A549 (cell line): ENCODE measurements at regions of chr16 and their contacts with region 1.

Region 1: DNA sequence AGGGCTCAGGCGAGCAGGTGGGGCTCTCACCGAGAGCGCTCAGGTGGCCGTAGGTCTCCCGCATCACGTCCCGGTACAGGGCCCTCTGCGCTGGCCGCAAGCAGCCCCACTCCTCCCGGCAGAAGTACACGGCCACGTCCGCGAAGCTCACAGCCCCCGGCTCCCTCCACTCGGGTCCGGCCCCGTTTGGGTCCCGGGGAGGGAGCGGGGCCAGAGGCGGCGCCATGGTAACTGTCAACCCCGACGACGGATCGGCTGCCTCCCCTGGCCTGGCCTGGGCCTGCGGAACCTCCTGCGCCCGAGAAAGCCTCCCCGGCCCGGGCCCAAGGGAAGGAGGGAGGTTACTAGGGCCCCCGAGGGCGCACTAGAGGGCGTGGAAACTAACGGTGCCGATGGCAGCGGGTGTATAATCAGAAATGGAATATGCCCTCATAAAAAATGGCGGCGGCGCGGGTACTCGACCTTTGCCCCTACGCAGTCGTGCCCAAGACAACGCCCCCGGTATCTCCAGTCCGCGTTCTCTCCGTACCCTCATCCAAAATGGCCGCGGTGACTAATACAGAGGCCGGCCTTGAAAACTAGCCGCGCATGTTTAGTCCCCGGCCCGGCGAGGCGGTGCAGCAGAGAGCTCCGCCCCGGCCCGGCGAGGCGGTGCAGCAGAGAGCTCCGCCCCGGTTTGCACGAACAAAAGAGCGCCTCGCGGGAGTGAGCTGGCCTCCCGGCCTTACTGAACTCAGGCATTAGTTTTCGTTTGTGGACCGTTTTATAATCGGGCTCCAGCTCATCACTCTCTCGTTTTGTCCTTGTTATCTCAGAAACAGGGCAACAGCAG is at the start of gene ZNF764:
- DNase-seq: peak; percentile 96 to 99
- ATAC-seq: peak; percentile 96 to 97
- H3K4me3 ChIP-seq: peak within 1 kb of the TSS; percentile 82
- H3K27ac ChIP-seq: peak within 1 kb of the TSS; percentile 93 to 98
- H3K4me1 ChIP-seq: peaks cover 4% of the 10 kb centered on the region; the same call in 1 of the 3 replicates
- CTCF ChIP-seq: no peak
- EP300 ChIP-seq: no peak
- POLR2A ChIP-seq: peak; percentile 55
- RAD21 ChIP-seq: peak in 1 of 2 experiments; percentile 19; a peak in 1 of 5 replicates
- polyA plus RNA-seq, gene ZNF764: 2.9 and 3.0 TPM in 2 replicates

Region 2: DNA sequence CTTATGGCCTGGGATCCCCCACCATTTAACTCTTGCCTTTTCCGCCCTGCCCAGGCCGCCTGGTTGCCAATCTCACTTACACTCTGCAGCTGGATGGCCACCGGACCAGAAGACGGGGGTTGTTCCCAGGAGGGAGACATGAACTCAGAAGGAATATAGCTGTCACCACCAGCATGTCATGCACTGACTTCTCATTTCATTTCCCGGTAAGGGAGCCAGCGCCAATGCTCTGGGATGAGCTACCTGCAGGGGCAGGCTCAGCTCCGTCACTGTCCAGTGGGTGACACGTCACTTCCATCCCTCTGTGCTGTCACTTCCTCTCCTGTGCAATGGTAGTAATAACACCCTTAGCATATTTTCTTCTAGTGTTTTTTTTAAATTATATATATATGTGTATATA is 58.9 kb before region 1 on chr16:
- CTCF ChIA-PET with region 1: no interaction called
- POLR2A ChIA-PET with region 1: no interaction called
- DNase-seq: no peak
- ATAC-seq: no peak; a peak in 1 of 6 replicates
- H3K4me3 ChIP-seq: no peak overlapping the region
- H3K27ac ChIP-seq: no peak overlapping the region
- H3K4me1 ChIP-seq: no peaks in the 10 kb centered on the region
- CTCF ChIP-seq: no peak
- EP300 ChIP-seq: no peak
- POLR2A ChIP-seq: no peak
- RAD21 ChIP-seq: no peak

Region 3: GRCh38 chr16:30534368-30535105 is 23.6 kb before region 1 on chr16 and contains the start of gene ZNF747:
- CTCF ChIA-PET with region 1: interaction called, 9 read pairs
- POLR2A ChIA-PET with region 1: interaction called, 36 read pairs
- DNase-seq: peak; percentile 77 to 90
- ATAC-seq: peak; percentile 91 to 93
- H3K4me3 ChIP-seq: peak within 1 kb of the TSS; percentile 52
- H3K27ac ChIP-seq: peak within 1 kb of the TSS; percentile 89 to 93
- H3K4me1 ChIP-seq: peaks cover 13% of the 10 kb centered on the region; the same call in 2 of the 3 replicates
- CTCF ChIP-seq: no peak
- EP300 ChIP-seq: no peak
- POLR2A ChIP-seq: peak; percentile 72
- RAD21 ChIP-seq: no peak; a peak in 1 of 5 replicates
- polyA plus RNA-seq, gene ZNF747: 4.8 and 5.2 TPM in 2 replicates

Region 4: DNA sequence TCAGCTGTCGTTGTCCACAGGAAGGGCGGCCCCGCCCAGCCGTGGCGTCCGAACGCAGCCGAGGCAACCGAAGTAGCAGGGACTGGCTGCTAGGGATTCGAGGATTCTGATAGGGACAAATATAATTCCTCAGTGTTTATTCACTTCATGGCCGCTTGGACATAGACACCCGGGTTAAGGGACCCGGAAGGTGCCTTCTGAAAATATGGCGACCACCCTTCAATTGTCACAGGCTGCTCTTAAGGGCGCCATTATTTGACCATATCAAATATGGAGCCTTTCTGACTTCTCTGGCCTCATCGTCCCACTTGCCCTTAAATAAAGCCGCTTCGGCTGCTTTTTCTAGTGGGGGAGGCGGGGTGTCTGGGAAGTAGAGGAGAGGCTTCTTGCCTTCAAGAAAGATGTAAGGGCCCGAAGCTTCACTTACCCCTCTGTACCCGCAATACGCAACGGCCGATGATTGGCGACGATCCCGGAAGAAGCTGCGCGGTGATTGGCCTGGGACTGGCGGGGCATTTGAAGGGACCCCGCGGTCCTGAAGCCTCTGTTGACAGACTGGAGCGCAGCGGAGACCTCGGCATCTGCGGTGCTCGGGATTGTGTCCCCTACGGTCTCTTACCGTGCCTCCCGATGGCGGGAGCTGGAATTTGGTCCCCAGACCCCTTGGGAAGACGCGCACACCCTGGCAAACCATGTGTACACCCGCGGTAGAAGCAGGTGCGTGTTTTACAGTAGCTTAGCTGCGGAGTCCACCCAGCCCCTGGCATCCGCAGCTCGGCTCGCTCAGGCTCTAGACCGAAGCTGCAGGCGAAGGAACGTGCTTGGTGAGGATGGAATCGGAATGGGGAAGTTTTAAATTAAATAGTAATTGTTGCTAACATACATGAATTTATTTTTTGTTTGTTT is 13.8 kb after region 1 on chr16 and contains the start of gene ZNF688:
- CTCF ChIA-PET with region 1: interaction called, 7 read pairs
- POLR2A ChIA-PET with region 1: interaction called, 44 read pairs
- DNase-seq: peak; percentile 95 to 97
- ATAC-seq: peak; percentile 89 to 92
- H3K4me3 ChIP-seq: peak within 1 kb of the TSS; percentile 53
- H3K27ac ChIP-seq: peak within 1 kb of the TSS; percentile 87 to 98
- H3K4me1 ChIP-seq: peaks cover 42% of the 10 kb centered on the region
- CTCF ChIP-seq: no peak
- EP300 ChIP-seq: no peak
- POLR2A ChIP-seq: no peak
- RAD21 ChIP-seq: no peak
- polyA plus RNA-seq, gene ZNF688: 4.8 and 6.7 TPM in 2 replicates

Region 5: DNA sequence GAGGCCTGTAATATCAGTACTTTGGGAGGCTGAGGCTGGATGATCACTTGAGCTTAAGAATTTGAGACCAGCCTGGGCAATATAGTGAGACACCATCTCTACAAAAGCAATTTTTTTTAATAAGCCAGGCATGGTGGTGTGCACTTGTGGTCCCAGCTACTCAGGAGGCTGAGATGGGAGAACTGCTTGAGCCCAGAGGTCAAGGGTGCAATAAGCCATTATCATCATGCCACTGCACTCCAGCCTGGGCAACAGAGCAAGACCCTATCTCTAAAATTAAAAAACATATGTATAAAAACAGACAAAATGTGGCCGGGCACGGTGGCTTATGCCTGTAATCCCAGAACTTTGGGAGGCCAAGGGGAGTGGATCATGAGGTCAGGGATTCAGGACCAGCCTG is 30.5 kb after region 1 on chr16:
- CTCF ChIA-PET with region 1: no interaction called
- POLR2A ChIA-PET with region 1: no interaction called
- DNase-seq: no peak
- ATAC-seq: no peak
- H3K4me3 ChIP-seq: no peak overlapping the region
- H3K27ac ChIP-seq: no peak overlapping the region
- H3K4me1 ChIP-seq: no peaks in the 10 kb centered on the region
- CTCF ChIP-seq: no peak
- EP300 ChIP-seq: no peak
- POLR2A ChIP-seq: no peak
- RAD21 ChIP-seq: no peak

Region 6: DNA sequence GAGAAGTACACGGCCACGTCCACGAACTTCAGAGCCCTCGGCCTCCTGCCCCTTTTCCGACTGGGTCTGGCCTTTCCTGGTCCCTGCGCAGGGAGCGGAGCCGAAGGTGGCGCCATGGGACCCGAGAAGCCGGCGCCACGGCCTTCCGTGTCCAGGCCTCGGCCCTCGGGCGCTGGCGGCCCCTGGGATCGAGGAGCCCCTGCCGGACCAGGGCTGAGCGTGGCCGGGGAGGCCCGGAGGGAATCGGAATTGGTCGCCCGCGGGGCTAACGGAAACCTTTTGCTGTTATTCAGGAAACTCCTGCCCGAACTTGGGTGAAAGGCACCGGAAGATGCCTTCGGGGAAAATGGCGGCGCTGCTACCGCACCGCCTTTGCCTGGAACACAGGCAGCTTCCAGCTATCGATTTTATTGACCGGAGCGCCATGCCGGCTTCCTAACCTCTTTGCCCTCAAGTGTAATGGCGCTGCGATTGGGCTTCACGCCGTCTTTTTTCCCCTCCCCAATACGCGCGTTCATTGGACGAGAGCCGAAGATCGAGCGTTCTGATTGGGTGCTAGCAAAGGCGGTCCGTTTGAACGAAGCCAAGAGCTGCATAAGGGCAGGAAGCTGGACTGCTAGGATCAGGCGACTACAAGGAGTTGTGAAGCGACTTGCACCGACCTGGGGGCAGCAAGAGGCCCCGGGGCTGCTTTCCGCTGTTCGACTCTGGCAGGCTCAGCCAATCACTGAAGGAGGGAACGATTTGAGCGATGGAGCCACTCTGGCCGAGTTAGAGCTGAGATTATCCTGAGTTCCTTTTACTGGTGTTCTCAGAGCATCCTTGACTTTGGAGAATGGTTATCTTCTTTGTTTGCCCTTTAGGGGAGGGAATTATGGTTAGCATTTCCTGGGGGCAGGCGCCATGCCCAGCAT is 52.0 kb after region 1 on chr16 and contains the start of gene ZNF689:
- CTCF ChIA-PET with region 1: interaction called, 10 read pairs
- POLR2A ChIA-PET with region 1: interaction called, 10 read pairs
- DNase-seq: peak; percentile 98
- ATAC-seq: peak; percentile 95
- H3K4me3 ChIP-seq: peak within 1 kb of the TSS; percentile 92
- H3K27ac ChIP-seq: peak within 1 kb of the TSS; percentile 92 to 96
- H3K4me1 ChIP-seq: peaks cover 10% of the 10 kb centered on the region; the same call in 1 of the 3 replicates
- CTCF ChIP-seq: no peak
- EP300 ChIP-seq: no peak
- POLR2A ChIP-seq: 0 out of 2 replicates have a peak, but pooled peaks have one; percentile 23
- RAD21 ChIP-seq: no peak
- polyA plus RNA-seq, gene ZNF689: 6.8 and 7.1 TPM in 2 replicates

Region 7: GRCh38 chr16:30628627-30629540 is 70.7 kb after region 1 on chr16:
- CTCF ChIA-PET with region 1: interaction called, 10 read pairs
- POLR2A ChIA-PET with region 1: interaction called, 4 read pairs
- DNase-seq: peak; percentile 73 to 86
- ATAC-seq: peak; percentile 95 to 99
- H3K4me3 ChIP-seq: peak overlapping the region; percentile 34
- H3K27ac ChIP-seq: peak overlapping the region; percentile 58 to 78
- H3K4me1 ChIP-seq: no peaks in the 10 kb centered on the region
- CTCF ChIP-seq: peak; percentile 87
- EP300 ChIP-seq: no peak
- POLR2A ChIP-seq: no peak
- RAD21 ChIP-seq: peak; percentile 81